ENCODE measurements at regions of chr15 and their contacts with region 1.

Region 1: DNA sequence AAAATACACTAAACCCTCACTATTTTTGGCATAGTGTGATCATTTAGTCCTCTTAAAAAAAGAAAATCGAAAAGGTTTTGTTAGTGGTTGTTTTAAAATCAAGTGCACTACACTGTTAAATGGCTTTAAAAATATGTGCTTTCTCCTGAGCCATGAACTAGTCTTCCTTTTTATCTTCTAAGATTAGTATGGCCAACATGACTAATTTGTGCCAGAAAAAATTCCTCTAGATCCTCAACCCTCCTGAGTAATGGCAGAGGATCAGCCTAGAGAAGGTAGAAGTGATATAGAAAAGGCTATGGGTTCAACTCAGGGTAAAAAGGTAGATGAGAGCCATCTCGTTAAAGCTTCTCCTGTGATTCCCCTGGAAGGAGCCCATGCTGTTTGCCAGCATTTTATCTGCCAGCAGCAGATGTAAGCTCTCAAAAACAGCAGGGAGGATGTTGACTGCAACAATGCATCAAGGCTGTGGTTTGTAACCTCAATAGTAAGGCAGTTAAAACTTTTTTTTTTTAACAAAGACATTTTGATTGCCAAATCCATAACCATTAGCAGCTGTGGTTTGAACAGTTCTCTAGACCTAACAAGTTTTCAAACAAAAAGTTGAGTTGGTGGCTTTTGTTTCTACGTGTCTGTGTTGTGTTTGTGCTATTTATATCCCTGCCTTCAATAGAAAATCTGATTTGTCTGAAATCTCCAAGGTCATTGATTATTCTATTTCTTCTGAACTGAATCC is 30.2 kb upstream of the ZNF609 start:
- DNase-seq: peak; percentile 91
- H3K4me3 ChIP-seq: no peak overlapping the region
- H3K27ac ChIP-seq: peak overlapping the region; percentile 57
- H3K27me3 ChIP-seq: no peaks in the 10 kb centered on the region
- CTCF ChIP-seq: no peak

Region 2: DNA sequence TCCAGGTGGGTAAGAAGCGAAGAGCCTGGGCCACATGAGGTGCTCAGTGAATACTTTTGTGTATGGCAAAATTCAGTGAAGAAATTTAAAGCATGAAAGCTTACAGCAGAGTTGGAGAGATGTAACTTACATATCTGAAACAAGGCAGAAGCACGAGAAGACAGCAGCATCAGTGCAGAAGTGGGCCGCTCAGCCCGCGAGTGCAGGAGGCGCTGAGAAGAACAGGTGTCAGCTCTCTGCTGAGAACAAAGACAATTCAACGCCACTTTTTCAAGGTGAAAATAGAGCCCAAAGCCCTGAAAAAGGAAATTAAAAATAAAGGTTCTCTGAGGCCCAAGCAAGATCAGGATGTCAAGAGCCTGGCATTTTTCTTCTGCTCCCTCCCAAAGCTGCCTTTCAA is 287.0 kb after region 1 on chr15:
- CTCF ChIA-PET with region 1: interaction called, 10 read pairs
- POLR2A ChIA-PET with region 1: no interaction called
- DNase-seq: no peak
- H3K4me3 ChIP-seq: no peak overlapping the region
- H3K27ac ChIP-seq: no peak overlapping the region
- H3K27me3 ChIP-seq: no peaks in the 10 kb centered on the region
- CTCF ChIP-seq: no peak